ENCODE measurements at regions of chr18 and their contacts with region 1.

Region 1: GRCh38 chr18:59631583-59632181 is 65.5 kb downstream of the CCBE1 start:
- DNase-seq: peak; percentile 48
- H3K4me3 Mint-ChIP-seq: no peak overlapping the region
- H3K27ac Mint-ChIP-seq: no peak overlapping the region
- H3K4me1 Mint-ChIP-seq: no peaks in the 10 kb centered on the region
- H3K27me3 Mint-ChIP-seq: peaks cover 14% of the 10 kb centered on the region
- CTCF ChIP-seq: peak; percentile 78

Region 2: GRCh38 chr18:59402432-59403090 is 229.1 kb before region 1 on chr18:
- CTCF ChIA-PET with region 1: no interaction called
- POLR2A ChIA-PET with region 1: no interaction called
- intact Hi-C with region 1: no loop called
- DNase-seq: peak; percentile 87
- H3K4me3 Mint-ChIP-seq: no peak overlapping the region
- H3K27ac Mint-ChIP-seq: no peak overlapping the region
- H3K4me1 Mint-ChIP-seq: no peaks in the 10 kb centered on the region
- H3K27me3 Mint-ChIP-seq: no peaks in the 10 kb centered on the region
- CTCF ChIP-seq: peak; percentile 98

Region 3: DNA sequence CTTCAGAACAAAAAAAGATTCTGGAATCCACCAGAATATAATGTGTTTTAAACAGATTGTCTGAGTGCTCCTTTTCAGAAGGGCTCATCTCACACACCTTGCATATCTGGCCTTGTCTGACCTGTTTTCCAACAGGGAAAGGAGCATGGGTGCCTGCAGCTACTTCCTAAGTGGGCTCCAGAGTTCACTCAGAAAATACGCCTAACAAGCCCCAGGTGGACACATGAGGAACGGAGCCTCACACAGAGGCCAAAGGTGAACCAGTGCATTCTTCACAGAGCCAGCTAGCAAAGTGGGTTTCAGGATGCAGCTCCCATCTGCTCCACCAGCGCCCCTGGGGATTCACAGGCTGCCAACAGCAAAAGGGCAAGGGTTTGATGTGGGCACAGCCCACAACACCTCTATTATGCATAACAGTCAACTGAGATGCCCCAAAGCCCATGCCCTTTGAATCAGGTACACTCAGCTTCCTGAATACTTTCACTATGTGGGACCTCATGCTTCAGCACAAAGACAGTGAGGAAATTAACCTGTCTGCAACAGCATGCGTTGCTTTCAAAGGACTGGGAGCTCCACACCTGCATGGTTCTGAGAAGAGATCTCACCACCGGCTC is 21.0 kb before region 1 on chr18:
- CTCF ChIA-PET with region 1: interaction called, 10 read pairs
- POLR2A ChIA-PET with region 1: interaction called, 3 read pairs
- intact Hi-C with region 1: no loop called
- DNase-seq: no peak
- H3K4me3 Mint-ChIP-seq: no peak overlapping the region
- H3K27ac Mint-ChIP-seq: no peak overlapping the region
- H3K4me1 Mint-ChIP-seq: no peaks in the 10 kb centered on the region
- H3K27me3 Mint-ChIP-seq: no peaks in the 10 kb centered on the region
- CTCF ChIP-seq: no peak

Region 4: DNA sequence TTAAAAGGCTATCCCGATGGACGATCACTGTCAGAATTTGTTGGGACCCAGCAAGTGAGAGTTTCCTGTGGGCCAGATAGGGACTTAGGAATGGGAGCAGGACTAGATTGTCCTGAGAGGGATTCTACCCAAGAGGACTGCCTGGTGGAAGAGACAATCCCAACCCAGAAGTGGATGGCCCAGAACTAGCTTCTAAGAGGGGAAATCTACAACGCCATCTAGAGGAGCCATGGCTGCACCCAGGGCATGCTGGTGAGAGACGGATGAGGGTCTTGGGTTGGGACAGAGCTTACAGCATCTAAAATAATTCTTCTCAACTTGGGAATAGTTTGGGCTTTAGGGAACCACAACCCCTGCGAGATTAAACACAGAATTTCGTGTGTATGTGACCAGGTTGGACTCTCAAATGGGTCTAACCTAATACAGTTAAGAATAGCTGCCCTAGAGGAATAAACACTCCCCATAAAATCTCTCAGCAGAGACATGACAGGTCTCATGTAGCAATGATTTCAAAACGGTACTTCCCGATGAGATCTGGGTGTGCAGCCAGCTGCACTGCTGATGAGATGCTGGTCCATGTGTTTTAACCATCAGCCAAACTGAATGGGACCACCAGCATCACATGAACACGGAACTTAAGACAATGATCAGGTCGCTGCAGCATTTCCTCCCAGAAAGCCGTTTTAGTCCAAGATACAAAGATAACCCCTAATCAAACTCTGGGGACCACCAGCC is 14.7 kb after region 1 on chr18:
- CTCF ChIA-PET with region 1: interaction called, 16 read pairs
- POLR2A ChIA-PET with region 1: interaction called, 4 read pairs
- intact Hi-C with region 1: no loop called
- DNase-seq: no peak
- H3K4me3 Mint-ChIP-seq: no peak overlapping the region
- H3K27ac Mint-ChIP-seq: no peak overlapping the region
- H3K4me1 Mint-ChIP-seq: peaks cover 5% of the 10 kb centered on the region
- H3K27me3 Mint-ChIP-seq: no peaks in the 10 kb centered on the region
- CTCF ChIP-seq: no peak

Region 5: GRCh38 chr18:59672235-59672711 is 40.6 kb after region 1 on chr18:
- CTCF ChIA-PET with region 1: interaction called, 11 read pairs
- POLR2A ChIA-PET with region 1: no interaction called
- intact Hi-C with region 1: no loop called
- DNase-seq: peak; percentile 52
- H3K4me3 Mint-ChIP-seq: no peak overlapping the region
- H3K27ac Mint-ChIP-seq: no peak overlapping the region
- H3K4me1 Mint-ChIP-seq: peaks cover 5% of the 10 kb centered on the region
- H3K27me3 Mint-ChIP-seq: no peaks in the 10 kb centered on the region
- CTCF ChIP-seq: no peak

Region 6: GRCh38 chr18:59690996-59691395 is 59.3 kb after region 1 on chr18:
- CTCF ChIA-PET with region 1: interaction called, 42 read pairs
- POLR2A ChIA-PET with region 1: interaction called, 3 read pairs
- intact Hi-C with region 1: loop called (anchors 1 kb)
- DNase-seq: peak; percentile 89
- H3K4me3 Mint-ChIP-seq: no peak overlapping the region
- H3K27ac Mint-ChIP-seq: peak overlapping the region; percentile 35
- H3K4me1 Mint-ChIP-seq: peaks cover 16% of the 10 kb centered on the region
- H3K27me3 Mint-ChIP-seq: no peaks in the 10 kb centered on the region
- CTCF ChIP-seq: no peak

Region 7: DNA sequence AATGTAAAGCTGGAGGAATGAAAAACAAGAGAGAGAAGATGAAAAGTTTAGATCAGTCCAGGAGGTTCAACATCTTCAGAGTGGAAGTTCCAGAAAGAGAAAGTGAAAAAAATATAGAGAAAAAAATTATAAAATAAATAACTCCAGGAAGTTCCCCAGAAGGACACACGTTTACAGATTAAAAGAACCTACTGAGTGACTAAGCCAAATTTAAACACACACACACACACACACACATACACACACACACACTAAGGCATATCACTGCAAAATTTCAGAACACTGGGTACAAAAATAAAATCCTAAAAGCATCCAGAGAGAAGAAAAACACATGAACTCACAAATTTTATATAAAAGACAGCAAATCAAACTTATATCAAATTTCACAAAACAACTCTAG is 182.3 kb after region 1 on chr18:
- CTCF ChIA-PET with region 1: interaction called, 10 read pairs
- POLR2A ChIA-PET with region 1: no interaction called
- intact Hi-C with region 1: no loop called
- DNase-seq: no peak
- H3K4me3 Mint-ChIP-seq: no peak overlapping the region
- H3K27ac Mint-ChIP-seq: no peak overlapping the region
- H3K4me1 Mint-ChIP-seq: peaks cover 10% of the 10 kb centered on the region
- H3K27me3 Mint-ChIP-seq: no peaks in the 10 kb centered on the region
- CTCF ChIP-seq: no peak

Region 8: DNA sequence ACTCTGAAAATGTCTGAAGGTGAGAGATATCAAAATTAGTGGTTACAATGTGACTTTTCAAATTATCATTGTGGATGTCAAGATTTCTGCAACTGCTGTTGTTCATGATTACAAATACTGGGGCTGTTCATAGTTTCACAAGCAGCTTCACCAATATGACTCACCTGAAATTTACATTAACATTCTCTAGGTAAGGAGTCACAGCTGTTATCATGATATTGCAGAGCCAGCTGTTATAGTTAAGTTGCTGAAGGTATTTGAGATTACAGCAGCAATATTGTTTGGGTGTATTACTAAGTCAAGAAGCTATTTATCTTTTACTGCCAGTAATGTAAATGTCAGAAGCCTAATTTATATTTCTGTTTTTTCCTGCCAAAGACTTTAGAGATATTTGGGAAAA is 600.9 kb after region 1 on chr18:
- CTCF ChIA-PET with region 1: no interaction called
- POLR2A ChIA-PET with region 1: no interaction called
- intact Hi-C with region 1: no loop called
- DNase-seq: peak; percentile 24
- H3K4me3 Mint-ChIP-seq: no peak overlapping the region
- H3K27ac Mint-ChIP-seq: no peak overlapping the region
- H3K4me1 Mint-ChIP-seq: no peaks in the 10 kb centered on the region
- H3K27me3 Mint-ChIP-seq: peaks cover 28% of the 10 kb centered on the region
- CTCF ChIP-seq: no peak